Posterior cingulate gyrus (tissue), 11 donors: ENCODE measurements at regions of chr9 and their contacts with region 1.

Region 1: DNA sequence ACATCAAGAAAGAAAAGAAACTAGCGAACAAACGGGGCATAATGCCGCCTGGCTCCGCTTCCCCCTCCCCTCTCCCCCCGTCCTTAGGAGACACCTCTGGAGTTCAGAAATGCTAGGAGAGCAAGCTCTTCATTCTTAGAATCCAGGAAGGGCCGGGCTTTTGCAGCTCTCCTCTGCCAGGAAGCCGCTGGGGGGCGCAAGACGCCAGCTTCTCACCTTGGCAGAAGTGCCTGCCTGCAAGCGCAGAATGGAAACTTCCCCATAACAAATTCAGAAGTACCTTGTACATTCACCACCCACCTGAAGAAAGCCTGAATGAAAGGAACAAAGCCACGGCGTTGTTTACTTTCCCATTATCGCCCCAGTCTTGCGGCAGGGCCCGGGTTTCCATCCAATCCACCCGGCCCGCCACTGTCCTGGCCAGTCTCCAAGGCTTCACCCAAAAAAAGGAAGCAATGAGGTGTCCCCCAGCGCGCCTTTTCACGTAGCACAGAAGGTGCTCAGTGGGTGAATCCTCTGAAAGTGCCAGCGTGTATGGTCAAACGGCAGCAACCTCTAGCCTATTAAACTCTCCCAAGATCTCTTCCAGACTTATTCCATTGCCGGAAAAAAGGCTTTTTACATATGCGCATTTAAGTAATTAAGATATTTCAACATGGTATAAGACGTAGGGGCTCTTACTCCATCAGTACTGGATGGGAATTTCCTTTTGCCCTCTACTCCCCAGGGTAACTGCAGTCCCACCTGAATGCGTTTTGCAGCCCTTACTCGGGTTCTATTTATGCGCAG is 1.6 kb upstream of the GADD45G start:
- DNase-seq: peak; percentile 84 to 99 (median 93)

Region 2: DNA sequence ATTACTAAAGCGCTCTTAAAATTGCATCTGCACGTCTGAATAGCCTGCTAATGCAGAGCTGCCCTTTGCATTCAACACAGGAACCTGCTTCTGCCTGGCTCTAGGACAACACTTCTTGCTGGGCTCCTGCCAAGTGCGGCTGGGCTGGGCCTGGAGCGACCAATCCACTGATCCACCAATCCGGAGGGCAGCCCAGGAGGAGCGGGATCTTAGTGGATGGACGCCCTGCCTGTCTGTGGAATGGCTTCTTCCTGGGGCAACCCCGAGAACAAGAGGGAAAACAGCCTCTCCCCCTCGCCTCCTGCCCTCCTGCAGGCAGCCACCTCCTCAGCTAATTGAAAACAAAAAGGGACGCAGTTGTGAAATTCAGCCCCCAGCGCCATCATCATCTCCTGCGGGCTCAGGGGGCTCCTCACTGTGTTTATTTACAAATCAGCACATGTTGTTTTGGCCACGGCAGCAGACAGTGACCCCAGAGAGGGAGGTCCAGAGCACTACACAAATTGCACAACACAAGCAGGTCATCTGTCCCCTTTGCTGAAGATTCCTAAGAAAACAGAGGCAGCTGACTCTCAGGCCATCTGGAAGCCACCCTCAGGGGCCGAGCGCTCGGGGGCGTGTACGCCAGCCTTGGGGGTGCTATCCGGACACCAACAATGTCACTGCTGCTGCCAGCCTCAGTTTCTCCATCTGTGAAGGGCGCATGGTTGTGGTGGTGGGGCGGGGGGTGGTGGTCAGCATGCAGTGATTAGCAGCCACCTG is 59.0 kb after region 1 on chr9:
- intact Hi-C with region 1: loop called (anchors 2 kb)
- DNase-seq: peak; percentile 93 to 99 (median 98)

Region 3: DNA sequence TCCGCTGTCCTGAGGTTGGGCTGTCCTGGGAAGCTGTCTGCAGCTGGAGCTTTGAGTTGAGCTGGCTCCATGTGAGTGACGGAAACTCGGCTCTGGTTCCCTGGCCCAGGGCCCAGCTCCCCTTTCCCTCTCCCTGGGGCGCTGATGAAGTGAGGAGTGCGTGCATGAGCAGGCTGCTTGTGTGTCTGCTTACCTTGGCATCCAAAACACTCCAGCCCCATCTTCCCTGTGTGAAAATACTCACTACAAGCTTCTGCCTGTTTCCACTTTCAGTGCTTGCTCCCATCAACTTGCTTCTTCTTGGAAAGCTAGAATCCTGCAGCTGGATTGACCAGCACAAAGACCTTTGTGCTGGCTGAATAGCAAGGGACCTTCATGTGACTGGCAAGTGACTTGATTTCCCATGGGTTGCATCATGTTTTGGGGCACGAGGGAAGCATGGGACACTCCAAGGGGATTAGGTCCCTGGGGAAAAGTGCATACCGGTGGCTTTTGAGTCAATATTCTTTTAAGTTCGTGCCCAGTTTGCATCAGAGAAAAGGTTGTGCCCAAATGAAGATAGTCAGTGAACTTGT is 199.7 kb after region 1 on chr9:
- intact Hi-C with region 1: loop called (anchors 5 kb)
- DNase-seq: peak in 6 of 10 donors; percentile 27 to 89 (median 42)

Region 4: DNA sequence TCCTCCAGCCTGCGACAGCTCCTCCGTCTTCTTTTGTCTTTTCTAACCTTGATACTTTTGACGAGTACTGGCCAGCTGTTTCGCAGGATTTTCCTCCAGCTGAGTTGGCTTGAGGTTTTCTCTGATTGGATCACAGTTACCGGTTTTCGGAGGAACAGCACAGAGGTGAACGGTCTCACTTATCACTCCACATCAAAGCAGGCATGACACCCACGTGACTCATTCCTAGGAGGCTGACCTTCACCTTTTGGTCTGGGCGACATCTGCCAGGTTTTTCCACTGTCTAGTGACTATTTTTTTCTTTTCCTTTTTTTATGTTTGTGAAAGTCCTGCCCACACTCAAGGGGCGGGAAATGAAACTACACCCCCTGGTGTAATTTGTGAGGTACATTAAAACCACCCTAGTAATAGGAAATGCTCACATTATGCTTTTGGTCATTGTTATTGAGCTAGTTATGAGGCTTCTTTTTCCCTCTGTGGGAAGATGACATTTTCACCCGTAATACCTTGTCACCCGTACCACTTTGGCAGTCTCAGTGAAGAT is 320.9 kb after region 1 on chr9:
- intact Hi-C with region 1: loop called (anchors 5 kb)
- DNase-seq: no peak

Region 5: DNA sequence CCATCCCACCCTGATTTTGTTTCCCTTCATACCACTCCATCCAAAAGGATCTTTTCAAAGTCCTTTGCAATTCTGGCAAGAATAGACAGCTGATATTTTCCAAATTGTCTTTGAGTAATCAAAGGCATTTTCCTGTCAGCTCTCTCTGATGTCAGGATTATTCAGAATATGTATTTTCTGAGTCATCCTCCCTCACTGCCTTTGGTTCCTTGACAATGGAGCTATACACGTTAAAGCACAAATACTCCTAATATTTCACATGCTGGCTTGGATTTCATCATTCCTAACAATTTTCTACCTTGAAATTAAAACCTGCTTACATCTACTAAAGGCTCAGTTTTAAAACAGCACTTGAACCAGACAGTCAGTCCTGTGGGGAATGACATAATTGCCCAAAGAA is 381.0 kb after region 1 on chr9:
- intact Hi-C with region 1: no loop called
- DNase-seq: no peak

Region 6: GRCh38 chr9:89999534-90000370 is 396.6 kb after region 1 on chr9:
- intact Hi-C with region 1: loop called (anchors 10 kb)
- DNase-seq: peak in 6 of 10 donors; percentile 30 to 89 (median 58)

Region 7: DNA sequence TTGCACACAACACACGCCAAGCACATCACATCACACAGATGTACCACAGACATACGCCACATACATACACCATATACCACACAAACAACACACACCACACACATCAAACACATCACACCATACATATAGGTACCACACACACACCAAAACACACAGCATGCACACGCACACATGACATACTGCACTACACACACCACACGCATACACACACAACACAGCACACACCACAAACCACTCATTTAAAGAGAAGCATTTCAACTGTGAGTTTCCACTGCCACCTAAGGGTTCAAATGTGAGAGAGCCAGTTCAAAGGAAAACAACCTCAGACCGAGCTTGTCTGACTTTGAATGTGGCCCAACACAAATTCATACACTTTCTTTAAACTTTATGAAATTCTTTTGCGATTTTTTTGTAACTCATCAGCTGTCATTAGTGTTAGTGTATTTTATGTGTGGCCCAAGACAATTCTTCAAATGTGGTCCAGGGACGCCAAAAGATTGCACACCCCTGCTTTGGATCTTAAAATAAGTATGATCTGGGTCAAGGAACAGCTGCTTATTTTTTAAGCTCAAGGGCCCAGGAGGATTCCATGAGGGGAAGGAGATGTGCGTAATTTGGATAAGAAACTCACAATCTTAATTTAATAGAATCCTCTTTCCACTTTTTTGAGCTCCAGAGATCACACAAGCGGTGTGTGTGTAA is 496.2 kb after region 1 on chr9:
- intact Hi-C with region 1: loop called (anchors 1 kb)
- DNase-seq: no peak